A673 (cell line): ENCODE measurements at regions of chr14 and their contacts with region 1.

Region 1: DNA sequence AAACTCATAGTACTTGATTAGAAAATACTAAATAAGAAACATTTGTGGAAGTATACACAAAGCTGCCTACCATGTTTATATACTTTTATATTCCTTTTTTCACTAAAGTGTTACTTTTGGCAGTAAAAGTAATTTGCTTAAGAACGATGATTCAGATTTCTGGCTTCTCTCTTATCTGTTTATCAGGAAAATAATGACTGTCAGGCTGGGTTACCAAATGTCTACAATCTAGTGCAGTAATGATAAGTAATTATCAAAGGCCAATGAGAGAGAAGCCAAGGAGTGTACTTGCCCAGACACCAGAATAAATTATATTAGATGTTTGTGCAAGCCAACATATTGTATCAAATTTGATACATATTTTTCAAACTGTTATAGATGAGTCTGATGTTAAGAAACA is 113.4 kb downstream of the RALGAPA1 start:
- DNase-seq: no peak
- H3K4me3 ChIP-seq: no peak overlapping the region
- H3K27ac ChIP-seq: no peak overlapping the region
- H3K4me1 ChIP-seq: peaks cover 52% of the 10 kb centered on the region
- H3K27me3 ChIP-seq: no peaks in the 10 kb centered on the region
- CTCF ChIP-seq: no peak

Region 2: GRCh38 chr14:35438910-35439713 is 256.5 kb before region 1 on chr14:
- CTCF ChIA-PET with region 1: interaction called, 11 read pairs
- POLR2A ChIA-PET with region 1: no interaction called
- intact Hi-C with region 1: loop called (anchors 2 kb)
- DNase-seq: peak; percentile 37
- H3K4me3 ChIP-seq: no peak overlapping the region
- H3K27ac ChIP-seq: no peak overlapping the region
- H3K4me1 ChIP-seq: no peaks in the 10 kb centered on the region
- H3K27me3 ChIP-seq: no peaks in the 10 kb centered on the region
- CTCF ChIP-seq: peak; percentile 71

Region 3: GRCh38 chr14:35808076-35808652 is 112.5 kb after region 1 on chr14:
- CTCF ChIA-PET with region 1: no interaction called
- POLR2A ChIA-PET with region 1: interaction called, 9 read pairs
- intact Hi-C with region 1: loop called (anchors 5 kb)
- DNase-seq: no peak
- H3K4me3 ChIP-seq: peak overlapping the region; percentile 93
- H3K27ac ChIP-seq: peak overlapping the region; percentile 89
- H3K4me1 ChIP-seq: peaks cover 12% of the 10 kb centered on the region
- H3K27me3 ChIP-seq: no peaks in the 10 kb centered on the region
- CTCF ChIP-seq: no peak